ENCODE measurements at regions of chr13 and their contacts with region 1.

Region 1: GRCh38 chr13:40069173-40070044 is 413.9 kb downstream of the COG6 start:
- DNase-seq: peak; percentile 75
- H3K4me3 ChIP-seq: peak overlapping the region; percentile 20; the same call in 1 of the 2 replicates
- H3K27ac ChIP-seq: no peak overlapping the region
- H3K4me1 ChIP-seq: peaks cover 12% of the 10 kb centered on the region
- H3K27me3 ChIP-seq: peaks cover 12% of the 10 kb centered on the region

Region 2: DNA sequence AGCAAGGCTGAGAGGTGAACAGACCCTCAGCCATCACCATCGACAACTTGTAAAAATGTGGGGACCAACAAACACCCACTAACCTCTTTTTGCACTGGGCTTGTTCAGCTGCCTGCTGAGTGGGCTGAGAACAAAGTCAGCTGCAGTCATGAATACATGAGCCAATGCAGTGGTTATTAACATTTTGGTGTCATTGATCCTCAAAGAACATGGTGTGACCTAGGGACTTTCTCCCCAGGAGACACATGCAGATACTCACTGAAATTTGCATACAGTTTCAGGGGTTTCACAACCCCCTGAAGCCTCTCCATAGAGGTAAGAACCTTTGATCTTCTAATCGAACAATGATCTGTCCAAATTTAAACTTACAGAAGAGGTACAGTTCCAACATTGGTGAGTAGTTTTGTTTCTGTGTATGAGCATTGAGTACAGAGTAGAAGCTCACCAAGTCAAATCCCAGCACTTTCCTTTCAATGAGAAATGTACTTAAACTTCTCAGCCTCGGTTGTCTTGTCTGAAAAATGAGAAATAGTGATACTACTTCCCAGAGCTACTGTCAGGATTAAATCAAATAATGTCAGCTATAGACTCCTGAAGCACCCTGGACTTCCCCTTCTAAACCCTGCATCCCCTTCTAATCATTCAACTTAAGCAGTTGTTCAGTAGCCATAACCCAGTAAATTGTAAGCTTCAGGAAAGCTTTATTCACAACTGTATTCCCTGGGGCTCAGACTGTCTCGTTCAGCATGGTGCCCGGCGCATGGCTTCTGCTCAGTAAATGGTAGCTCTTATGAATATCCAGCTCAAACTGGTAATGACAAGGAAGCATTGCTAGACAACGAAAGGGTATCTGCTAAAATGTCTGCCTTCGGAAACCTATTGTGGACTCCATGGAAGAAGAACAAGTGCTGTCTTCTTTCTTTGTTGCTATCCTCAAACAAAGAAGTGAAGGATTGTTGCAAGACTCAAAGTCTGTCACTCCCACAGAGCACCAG is 448.4 kb after region 1 on chr13:
- in situ Hi-C with region 1: no loop called
- DNase-seq: no peak
- H3K4me3 ChIP-seq: no peak overlapping the region
- H3K27ac ChIP-seq: no peak overlapping the region
- H3K4me1 ChIP-seq: no peaks in the 10 kb centered on the region
- H3K27me3 ChIP-seq: peaks cover 6% of the 10 kb centered on the region

Region 3: DNA sequence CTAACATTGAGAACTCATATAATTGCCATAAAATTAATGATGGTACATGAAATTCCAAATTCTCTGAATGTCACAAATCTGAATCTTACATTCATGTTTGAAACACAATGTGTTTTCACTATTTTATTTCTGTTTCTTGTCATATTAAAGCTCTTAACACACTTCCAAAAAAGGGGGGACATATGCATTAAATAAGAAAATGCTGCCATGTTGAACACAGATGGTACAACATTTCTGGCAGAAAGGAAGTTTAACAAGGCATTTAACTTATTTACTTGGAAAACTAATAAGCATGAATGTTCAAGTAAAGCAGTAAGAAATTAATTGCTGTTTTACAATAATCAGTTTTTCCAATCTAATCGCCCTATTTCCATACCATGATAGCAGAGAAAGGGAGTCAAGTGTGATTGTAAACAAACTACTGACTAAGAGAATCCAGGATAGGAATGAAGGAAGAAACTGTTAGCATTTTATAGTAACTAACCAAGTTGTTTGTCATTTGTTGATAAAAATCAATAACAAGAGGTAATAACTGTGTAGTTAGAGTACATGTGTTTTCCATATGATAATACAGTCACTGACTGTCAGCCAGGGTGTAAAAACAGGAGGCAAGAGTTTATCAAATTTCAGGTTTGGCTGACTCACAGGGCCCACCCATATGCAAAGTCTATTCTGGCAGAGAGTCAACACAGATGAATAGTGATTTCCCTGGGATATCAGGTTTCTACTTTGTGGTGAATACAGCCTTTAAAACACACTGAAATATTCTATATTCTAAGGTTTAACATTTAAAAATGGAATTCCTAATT is 602.8 kb after region 1 on chr13:
- in situ Hi-C with region 1: loop called (anchors 10 kb)
- DNase-seq: peak; percentile 69
- H3K4me3 ChIP-seq: no peak overlapping the region
- H3K27ac ChIP-seq: no peak overlapping the region
- H3K4me1 ChIP-seq: no peaks in the 10 kb centered on the region
- H3K27me3 ChIP-seq: no peaks in the 10 kb centered on the region

Measured in GM23248 (cell line).